K562 (cell line): ENCODE measurements at regions of chr15 and their contacts with region 1.

Region 1: DNA sequence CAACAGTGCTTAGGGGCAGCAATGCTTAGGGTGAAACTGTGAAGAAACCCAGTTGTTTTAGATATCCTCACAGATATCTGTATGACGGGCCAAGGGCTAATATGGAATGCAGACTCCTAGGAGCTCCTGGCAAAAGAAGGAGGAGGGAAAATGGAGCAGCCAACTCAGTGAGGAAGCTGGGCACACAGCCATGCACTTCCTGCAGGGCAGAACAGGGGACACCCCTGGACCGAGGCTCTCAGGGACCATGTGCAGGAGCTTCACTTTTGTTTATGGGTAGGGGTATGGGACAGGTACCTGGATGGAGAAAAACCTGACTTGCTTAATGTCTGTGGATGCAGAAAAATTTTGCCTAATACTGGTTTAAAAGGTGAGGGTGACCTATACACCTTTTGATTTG is 20.2 kb downstream of the NIPA1 start:
- DNase-seq: no peak
- ATAC-seq: no peak
- H3K4me3 ChIP-seq: no peak overlapping the region
- H3K27ac ChIP-seq: no peak overlapping the region
- H3K4me1 ChIP-seq: no peaks in the 10 kb centered on the region
- H3K27me3 ChIP-seq: no peaks in the 10 kb centered on the region
- CTCF ChIP-seq: no peak
- EP300 ChIP-seq: no peak
- POLR2A ChIP-seq: no peak
- RAD21 ChIP-seq: no peak

Region 2: GRCh38 chr15:22262613-22263020 is 544.0 kb before region 1 on chr15:
- CTCF ChIA-PET with region 1: no interaction called
- POLR2A ChIA-PET with region 1: no interaction called
- in situ Hi-C with region 1: no loop called
- intact Hi-C with region 1: no loop called
- DNase-seq: no peak
- ATAC-seq: peak; percentile 53
- H3K4me3 ChIP-seq: no peak overlapping the region
- H3K27ac ChIP-seq: no peak overlapping the region
- H3K4me1 ChIP-seq: peaks cover 0 to 3% of the 10 kb centered on the region in 2 experiments; a peak in 1 of 5 replicates
- H3K27me3 ChIP-seq: peaks cover 9 to 21% of the 10 kb centered on the region in 2 experiments; a peak in 4 of 5 replicates
- CTCF ChIP-seq: no peak
- EP300 ChIP-seq: no peak
- POLR2A ChIP-seq: no peak
- RAD21 ChIP-seq: no peak

Region 3: DNA sequence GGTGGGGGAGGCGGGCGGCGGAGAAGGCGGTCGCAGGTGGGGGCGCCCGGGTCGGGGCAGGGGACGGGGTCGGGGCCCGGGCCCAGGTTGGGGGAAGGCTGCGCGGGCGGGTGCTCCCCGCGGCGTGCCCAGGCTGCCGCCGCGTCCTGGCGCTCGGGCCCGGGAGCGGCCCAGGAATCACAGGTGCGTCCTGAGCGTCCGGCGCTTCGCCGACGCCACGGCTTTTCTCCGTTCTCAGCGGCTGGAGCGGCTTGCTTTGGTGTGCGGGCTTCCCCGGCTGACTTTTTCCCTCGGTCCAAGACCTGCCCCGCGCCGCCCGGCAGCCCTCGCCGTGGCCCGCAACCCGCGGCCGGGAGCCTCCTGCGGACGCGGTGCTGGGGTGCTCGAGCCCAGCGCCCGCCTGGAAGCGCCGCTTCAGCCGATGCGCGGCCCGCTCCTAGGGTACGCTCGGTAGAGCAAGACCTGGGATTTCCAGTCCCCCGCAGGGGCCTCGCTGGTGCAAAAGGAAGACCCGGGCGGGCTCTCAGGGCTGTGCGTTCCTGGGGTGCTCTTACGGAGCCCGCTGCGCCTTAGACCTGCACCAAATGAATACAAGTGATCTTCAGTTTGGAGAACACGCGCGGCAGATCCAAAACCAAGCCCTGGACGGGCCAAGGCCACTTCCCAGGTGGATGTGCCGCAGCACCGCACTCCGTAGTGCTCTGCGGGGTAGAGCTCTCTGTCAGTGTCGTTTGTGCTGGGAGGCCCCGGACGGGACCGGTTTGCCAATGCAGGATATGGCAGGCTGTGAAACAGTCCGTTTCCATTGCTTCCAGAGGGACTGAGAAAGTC is 19.6 kb before region 1 on chr15:
- CTCF ChIA-PET with region 1: no interaction called
- POLR2A ChIA-PET with region 1: interaction called, 10 read pairs
- in situ Hi-C with region 1: no loop called
- intact Hi-C with region 1: no loop called
- DNase-seq: peak; percentile 31 to 70 (median 40)
- ATAC-seq: peak; percentile 59
- H3K4me3 ChIP-seq: peak overlapping the region; percentile 69
- H3K27ac ChIP-seq: peak overlapping the region; percentile 76
- H3K4me1 ChIP-seq: peaks cover 4 to 31% of the 10 kb centered on the region in 2 experiments; a peak in 3 of 5 replicates
- H3K27me3 ChIP-seq: no peaks in the 10 kb centered on the region
- CTCF ChIP-seq: no peak
- EP300 ChIP-seq: no peak
- POLR2A ChIP-seq: no peak
- RAD21 ChIP-seq: no peak

Region 4: GRCh38 chr15:23003736-23004135 is 197.1 kb after region 1 on chr15:
- CTCF ChIA-PET with region 1: no interaction called
- POLR2A ChIA-PET with region 1: no interaction called
- in situ Hi-C with region 1: no loop called
- intact Hi-C with region 1: no loop called
- DNase-seq: no peak
- ATAC-seq: no peak
- H3K4me3 ChIP-seq: no peak overlapping the region
- H3K27ac ChIP-seq: no peak overlapping the region
- H3K4me1 ChIP-seq: no peaks in the 10 kb centered on the region
- H3K27me3 ChIP-seq: no peaks in the 10 kb centered on the region
- CTCF ChIP-seq: peak in 1 of 3 experiments; percentile 11; a peak in 1 of 6 replicates
- EP300 ChIP-seq: no peak
- POLR2A ChIP-seq: no peak
- RAD21 ChIP-seq: no peak